Activated B cell treated with CpG ODN at 0.5 μM for 24 hours (primary cell): ENCODE measurements at regions of chr5 and their contacts with region 1.

Region 1: GRCh38 chr5:133868946-133869518 is 99.4 kb downstream of the C5orf15 start:
- DNase-seq: peak; percentile 64
- ATAC-seq: peak; percentile 83
- H3K4me3 Mint-ChIP-seq: no peak overlapping the region
- H3K27ac Mint-ChIP-seq: peak overlapping the region; percentile 25
- H3K4me1 Mint-ChIP-seq: peaks cover 18% of the 10 kb centered on the region
- H3K27me3 Mint-ChIP-seq: no peaks in the 10 kb centered on the region
- CTCF ChIP-seq: no peak

Region 2: DNA sequence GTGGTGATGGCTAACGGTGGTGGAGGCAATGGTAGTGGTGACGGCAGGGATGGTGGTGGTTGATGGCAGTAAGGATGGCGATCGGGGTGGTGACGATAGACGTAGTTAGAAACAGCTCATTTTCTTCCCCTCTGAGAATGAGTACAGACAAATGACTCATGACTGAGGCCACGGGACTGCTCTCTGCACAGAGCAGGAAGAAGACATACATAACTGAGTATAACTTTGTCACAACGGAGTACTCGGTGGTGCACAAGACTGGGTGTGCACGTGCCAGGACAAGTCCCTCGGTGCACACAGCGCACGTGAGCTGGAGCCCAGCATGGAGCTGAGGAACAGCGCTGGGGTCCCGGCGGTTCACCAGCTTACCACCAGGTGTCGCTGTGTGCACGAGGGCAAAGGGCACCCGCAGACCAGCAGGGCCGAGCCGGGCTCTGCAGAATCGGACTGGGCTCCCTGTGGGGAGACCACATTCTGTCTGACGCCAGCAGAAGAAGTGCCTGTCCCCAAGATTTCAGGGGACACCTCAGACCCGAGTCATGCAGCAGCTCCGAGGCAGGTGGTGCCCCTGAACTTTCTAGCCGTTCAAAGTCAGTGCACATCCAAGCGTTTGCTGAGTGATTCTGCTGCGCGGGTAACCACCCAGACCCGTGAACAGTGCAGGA is 445.3 kb before region 1 on chr5:
- CTCF ChIA-PET with region 1: interaction called, 16 read pairs
- POLR2A ChIA-PET with region 1: no interaction called
- intact Hi-C with region 1: loop called (anchors 1 kb)
- DNase-seq: peak; percentile 75
- ATAC-seq: peak; percentile 94
- H3K4me3 Mint-ChIP-seq: no peak overlapping the region
- H3K27ac Mint-ChIP-seq: peak overlapping the region; percentile 19
- H3K4me1 Mint-ChIP-seq: peaks cover 10% of the 10 kb centered on the region
- H3K27me3 Mint-ChIP-seq: peaks cover 3% of the 10 kb centered on the region
- CTCF ChIP-seq: peak; percentile 81

Region 3: GRCh38 chr5:133610489-133611356 is 258.3 kb before region 1 on chr5:
- CTCF ChIA-PET with region 1: interaction called, 3 read pairs
- POLR2A ChIA-PET with region 1: no interaction called
- intact Hi-C with region 1: loop called (anchors 10 kb)
- DNase-seq: peak; percentile 39
- ATAC-seq: peak; percentile 73
- H3K4me3 Mint-ChIP-seq: peak overlapping the region; percentile 73
- H3K27ac Mint-ChIP-seq: no peak overlapping the region
- H3K4me1 Mint-ChIP-seq: peaks cover 17% of the 10 kb centered on the region
- H3K27me3 Mint-ChIP-seq: peaks cover 53% of the 10 kb centered on the region
- CTCF ChIP-seq: no peak

Region 4: GRCh38 chr5:133881576-133882388 is 12.8 kb after region 1 on chr5:
- CTCF ChIA-PET with region 1: interaction called, 12 read pairs
- POLR2A ChIA-PET with region 1: interaction called, 3 read pairs
- intact Hi-C with region 1: no loop called
- DNase-seq: no peak
- ATAC-seq: no peak
- H3K4me3 Mint-ChIP-seq: no peak overlapping the region
- H3K27ac Mint-ChIP-seq: no peak overlapping the region
- H3K4me1 Mint-ChIP-seq: peaks cover 42% of the 10 kb centered on the region
- H3K27me3 Mint-ChIP-seq: no peaks in the 10 kb centered on the region
- CTCF ChIP-seq: no peak

Region 5: GRCh38 chr5:133977161-133977787 is 108.2 kb after region 1 on chr5:
- CTCF ChIA-PET with region 1: interaction called, 10 read pairs
- POLR2A ChIA-PET with region 1: no interaction called
- intact Hi-C with region 1: no loop called
- DNase-seq: no peak
- ATAC-seq: peak; percentile 54
- H3K4me3 Mint-ChIP-seq: no peak overlapping the region
- H3K27ac Mint-ChIP-seq: peak overlapping the region; percentile 68
- H3K4me1 Mint-ChIP-seq: peaks cover 29% of the 10 kb centered on the region
- H3K27me3 Mint-ChIP-seq: no peaks in the 10 kb centered on the region
- CTCF ChIP-seq: no peak